GM12878 (cell line): ENCODE measurements at regions of chr1 and their contacts with region 1.

Region 1: GRCh38 chr1:119327436-119328155 is 41.0 kb upstream of the HAO2 start:
- DNase-seq: no peak
- ATAC-seq: peak; percentile 24
- H3K4me3 ChIP-seq: peak overlapping the region; percentile 20; the same call in 1 of the 2 replicates
- H3K27ac ChIP-seq: no peak overlapping the region
- H3K4me1 ChIP-seq: peaks cover 24% of the 10 kb centered on the region
- H3K27me3 ChIP-seq: no peaks in the 10 kb centered on the region
- CTCF ChIP-seq: peak; percentile 39 to 60 (median 46)
- EP300 ChIP-seq: no peak
- POLR2A ChIP-seq: no peak
- RAD21 ChIP-seq: peak; percentile 20; the same call in 1 of the 2 replicates

Region 2: DNA sequence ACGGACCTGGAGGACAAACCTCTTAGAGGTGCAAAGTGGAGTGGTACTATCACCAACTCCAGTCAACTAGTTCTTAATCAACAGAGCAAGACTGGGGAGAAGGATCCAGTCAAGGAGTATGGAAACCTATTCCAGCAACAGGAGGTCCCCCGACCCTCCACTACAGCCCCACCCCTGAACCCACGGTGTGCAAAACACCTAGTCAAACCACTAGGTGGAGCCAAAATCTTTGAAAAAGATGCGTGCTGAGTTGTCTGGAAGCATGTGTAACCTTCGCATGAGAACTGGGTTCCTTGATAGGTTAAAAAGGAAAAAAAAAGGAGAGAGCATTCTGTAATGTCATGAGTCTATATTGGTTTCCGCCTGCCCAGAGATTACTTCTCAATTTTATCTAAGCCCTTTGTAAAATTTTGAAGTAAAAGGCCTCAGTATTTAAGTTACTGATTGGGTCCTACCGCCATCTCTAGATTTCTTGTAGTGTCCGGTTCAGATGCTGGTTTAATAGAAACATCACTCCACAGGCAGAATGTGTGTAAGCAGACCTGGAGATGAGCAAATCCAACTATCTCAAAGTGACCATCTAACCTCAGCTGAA is 40.9 kb before region 1 on chr1:
- CTCF ChIA-PET with region 1: interaction called, 31 read pairs
- POLR2A ChIA-PET with region 1: no interaction called
- RAD21 ChIA-PET with region 1: interaction called, 6 read pairs
- SMC1A ChIA-PET with region 1: interaction called, 10 read pairs
- in situ Hi-C with region 1: no loop called
- intact Hi-C with region 1: no loop called
- DNase-seq: no peak
- ATAC-seq: peak; percentile 98
- H3K4me3 ChIP-seq: no peak overlapping the region
- H3K27ac ChIP-seq: no peak overlapping the region
- H3K4me1 ChIP-seq: no peaks in the 10 kb centered on the region
- H3K27me3 ChIP-seq: no peaks in the 10 kb centered on the region
- CTCF ChIP-seq: peak; percentile 67 to 73 (median 72)
- EP300 ChIP-seq: no peak
- POLR2A ChIP-seq: no peak
- RAD21 ChIP-seq: peak; percentile 97

Region 3: DNA sequence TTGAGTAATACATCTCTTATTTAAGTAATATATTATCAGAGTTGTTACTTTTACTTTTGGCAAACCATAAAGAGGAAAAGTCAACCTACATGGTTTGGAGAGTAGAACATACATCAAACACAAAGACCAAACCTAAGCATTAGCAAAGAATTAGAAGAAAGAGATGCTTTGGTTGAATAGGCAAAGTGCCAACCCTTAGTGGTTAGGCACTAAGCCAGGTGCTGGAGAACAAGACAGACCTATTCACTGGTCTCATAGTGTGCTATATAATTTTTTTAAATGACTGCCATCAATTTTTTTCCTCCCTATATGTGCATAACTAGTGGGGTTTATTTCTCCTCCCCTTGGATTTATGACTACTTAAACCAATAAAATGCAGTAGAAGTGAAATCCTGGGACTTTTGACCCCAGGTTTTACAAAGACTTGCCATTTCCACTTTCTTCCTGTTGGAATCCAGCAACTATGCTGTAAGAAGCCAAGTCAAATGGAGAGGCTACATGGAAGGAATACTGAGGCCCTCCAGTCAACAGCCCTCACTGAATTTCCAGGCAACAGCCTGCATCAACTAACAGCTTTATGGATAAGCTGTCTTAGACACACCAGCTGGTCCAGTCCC is 28.8 kb before region 1 on chr1:
- CTCF ChIA-PET with region 1: interaction called, 7 read pairs
- POLR2A ChIA-PET with region 1: interaction called, 5 read pairs
- RAD21 ChIA-PET with region 1: interaction called, 18 read pairs
- SMC1A ChIA-PET with region 1: interaction called, 43 read pairs
- in situ Hi-C with region 1: no loop called
- intact Hi-C with region 1: no loop called
- DNase-seq: no peak
- ATAC-seq: peak; percentile 41
- H3K4me3 ChIP-seq: no peak overlapping the region
- H3K27ac ChIP-seq: no peak overlapping the region
- H3K4me1 ChIP-seq: no peaks in the 10 kb centered on the region
- H3K27me3 ChIP-seq: peaks cover 0 to 3% of the 10 kb centered on the region in 2 experiments; a peak in 1 of 4 replicates
- CTCF ChIP-seq: no peak
- EP300 ChIP-seq: no peak
- POLR2A ChIP-seq: no peak
- RAD21 ChIP-seq: no peak

Region 4: GRCh38 chr1:119347858-119348257 is 20.3 kb after region 1 on chr1:
- CTCF ChIA-PET with region 1: interaction called, 47 read pairs
- POLR2A ChIA-PET with region 1: interaction called, 7 read pairs
- RAD21 ChIA-PET with region 1: interaction called, 48 read pairs
- SMC1A ChIA-PET with region 1: interaction called, 108 read pairs
- in situ Hi-C with region 1: no loop called
- intact Hi-C with region 1: loop called (anchors 1 kb)
- DNase-seq: peak; percentile 77
- ATAC-seq: peak; percentile 96
- H3K4me3 ChIP-seq: no peak overlapping the region
- H3K27ac ChIP-seq: no peak overlapping the region
- H3K4me1 ChIP-seq: peaks cover 5% of the 10 kb centered on the region; the same call in 1 of the 2 replicates
- H3K27me3 ChIP-seq: no peaks in the 10 kb centered on the region
- CTCF ChIP-seq: no peak
- EP300 ChIP-seq: 0 out of 4 replicates have a peak, but pooled peaks of 1 of the 2 experiments have one; percentile 43
- POLR2A ChIP-seq: no peak
- RAD21 ChIP-seq: no peak